A549 (cell line): ENCODE measurements at regions of chr16 and their contacts with region 1.

Region 1: GRCh38 chr16:19118938-19119431 is 5.2 kb downstream of the ITPRIPL2 start:
- DNase-seq: peak; percentile 71 to 82
- ATAC-seq: peak in 1 of 2 experiments; percentile 45; a peak in 3 of 6 replicates
- H3K4me3 ChIP-seq: peak overlapping the region; percentile 24
- H3K27ac ChIP-seq: peak overlapping the region; percentile 90
- H3K4me1 ChIP-seq: peaks cover 91% of the 10 kb centered on the region
- CTCF ChIP-seq: no peak
- EP300 ChIP-seq: no peak
- POLR2A ChIP-seq: no peak
- RAD21 ChIP-seq: 0 out of 5 replicates have a peak, but pooled peaks of 1 of the 2 experiments have one; percentile 4

Region 2: DNA sequence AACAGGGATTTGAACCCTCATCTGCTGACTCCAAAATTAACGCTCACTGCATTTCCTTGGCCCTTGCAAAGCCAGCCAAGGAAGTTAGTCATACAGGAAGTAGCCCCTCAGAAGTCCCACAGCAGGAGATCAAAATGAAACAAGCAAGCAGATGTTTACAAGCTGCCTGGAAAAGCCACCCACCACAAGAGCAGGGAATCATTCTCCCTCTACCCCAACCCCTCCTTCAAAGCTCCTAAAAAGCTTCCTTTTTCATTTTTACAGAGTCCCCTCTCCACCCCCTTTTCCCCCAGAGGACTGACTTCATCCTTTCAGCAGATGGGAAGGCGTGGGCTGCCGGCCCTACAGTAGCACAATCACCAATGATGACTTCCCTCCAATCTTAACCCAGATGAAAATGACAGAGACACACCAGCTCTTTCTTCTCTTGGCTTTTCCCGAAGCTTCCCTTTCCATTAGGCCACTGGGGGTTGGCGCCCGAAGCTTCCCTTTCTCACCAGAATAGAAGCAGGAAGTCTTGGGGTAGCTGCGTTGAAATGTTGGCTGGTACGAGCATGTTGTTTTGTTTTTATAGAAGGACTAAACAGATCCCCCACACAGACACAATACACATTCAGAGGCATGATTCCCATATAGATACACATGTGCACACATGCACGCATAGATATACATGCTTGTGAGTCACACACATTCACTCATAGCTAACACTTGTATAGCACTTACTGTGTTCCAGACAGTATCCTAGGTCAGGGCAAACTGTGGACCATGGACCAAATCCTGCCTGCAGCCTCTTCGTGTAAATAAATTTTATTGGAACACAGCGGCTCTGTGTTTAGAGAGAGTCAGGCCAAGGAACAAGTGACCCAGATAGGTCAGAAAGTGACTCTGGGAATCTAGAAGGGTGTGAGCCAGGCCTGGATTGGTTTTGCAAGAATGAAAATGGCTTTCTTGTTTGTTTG is 12.1 kb after region 1 on chr16:
- CTCF ChIA-PET with region 1: interaction called, 12 read pairs
- POLR2A ChIA-PET with region 1: interaction called, 7 read pairs
- DNase-seq: peak in 1 of 2 experiments; percentile 63
- ATAC-seq: peak; percentile 63 to 66
- H3K4me3 ChIP-seq: no peak overlapping the region
- H3K27ac ChIP-seq: peak overlapping the region; percentile 69 to 83
- H3K4me1 ChIP-seq: peaks cover 38% of the 10 kb centered on the region
- CTCF ChIP-seq: no peak
- EP300 ChIP-seq: no peak
- POLR2A ChIP-seq: no peak
- RAD21 ChIP-seq: no peak